ENCODE measurements at regions of chr1 and their contacts with region 1.

Region 1: DNA sequence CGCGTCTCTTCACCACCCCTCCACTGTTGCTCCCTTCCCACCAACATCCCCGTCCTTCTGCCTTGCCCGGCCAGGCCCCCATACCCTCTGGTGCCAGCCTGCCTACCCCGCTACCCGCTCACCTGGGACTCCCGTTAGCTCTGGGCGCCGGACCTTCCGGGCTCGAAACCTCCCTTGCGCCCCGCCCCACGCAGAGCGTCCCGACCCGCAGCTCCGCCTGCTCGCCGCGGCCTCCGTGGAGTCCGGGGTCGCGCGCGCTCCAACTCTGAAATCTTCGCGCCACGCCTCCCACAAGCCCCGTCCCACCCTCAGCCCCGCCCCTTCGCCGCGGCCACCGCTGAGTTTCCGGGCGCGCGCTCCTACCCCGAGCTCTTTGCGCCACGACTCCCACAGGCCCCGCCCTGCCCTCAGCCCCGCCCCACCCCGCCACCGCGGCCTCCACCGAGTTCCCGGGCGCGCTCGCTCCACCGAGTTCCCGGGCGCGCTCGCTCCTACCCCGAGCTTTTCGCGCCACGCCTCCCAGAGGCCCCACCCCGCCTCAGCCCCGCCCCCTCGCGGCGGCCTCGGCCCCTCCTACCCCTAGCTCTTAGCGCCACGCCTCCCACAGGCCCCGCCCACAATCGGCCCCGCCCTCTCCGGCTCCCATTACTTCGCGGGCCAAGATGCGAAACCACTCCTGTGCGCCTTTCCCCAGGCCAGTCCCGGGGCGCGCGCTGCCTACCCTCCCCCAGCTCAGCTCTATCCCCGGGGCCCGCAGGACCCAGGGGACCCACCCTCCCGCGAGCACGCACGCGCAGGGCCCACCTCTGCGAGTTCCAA is at the start of gene IFT25:
- DNase-seq: peak; percentile 95
- H3K4me3 Mint-ChIP-seq: peak within 1 kb of the TSS; percentile 90
- H3K27ac Mint-ChIP-seq: peak within 1 kb of the TSS; percentile 89
- H3K4me1 Mint-ChIP-seq: peaks cover 61% of the 10 kb centered on the region
- H3K27me3 Mint-ChIP-seq: no peaks in the 10 kb centered on the region
- total RNA-seq, gene IFT25: 50.2 and 52.6 TPM in 2 replicates

Region 2: GRCh38 chr1:52056163-52056936 is 1889.3 kb before region 1 on chr1 and contains the start of gene BTF3L4:
- intact Hi-C with region 1: loop called (anchors 10 kb)
- DNase-seq: peak; percentile 92
- H3K4me3 Mint-ChIP-seq: peak within 1 kb of the TSS; percentile 100
- H3K27ac Mint-ChIP-seq: peak within 1 kb of the TSS; percentile 100
- H3K4me1 Mint-ChIP-seq: peaks cover 72% of the 10 kb centered on the region
- H3K27me3 Mint-ChIP-seq: no peaks in the 10 kb centered on the region
- total RNA-seq, gene BTF3L4: 44.9 and 47.5 TPM in 2 replicates

Region 3: GRCh38 chr1:53765657-53766056 is 180.0 kb before region 1 on chr1:
- intact Hi-C with region 1: loop called (anchors 10 kb)
- DNase-seq: no peak
- H3K4me3 Mint-ChIP-seq: peak overlapping the region; percentile 15
- H3K27ac Mint-ChIP-seq: peak overlapping the region; percentile 81
- H3K4me1 Mint-ChIP-seq: peaks cover 34% of the 10 kb centered on the region
- H3K27me3 Mint-ChIP-seq: no peaks in the 10 kb centered on the region

Region 4: DNA sequence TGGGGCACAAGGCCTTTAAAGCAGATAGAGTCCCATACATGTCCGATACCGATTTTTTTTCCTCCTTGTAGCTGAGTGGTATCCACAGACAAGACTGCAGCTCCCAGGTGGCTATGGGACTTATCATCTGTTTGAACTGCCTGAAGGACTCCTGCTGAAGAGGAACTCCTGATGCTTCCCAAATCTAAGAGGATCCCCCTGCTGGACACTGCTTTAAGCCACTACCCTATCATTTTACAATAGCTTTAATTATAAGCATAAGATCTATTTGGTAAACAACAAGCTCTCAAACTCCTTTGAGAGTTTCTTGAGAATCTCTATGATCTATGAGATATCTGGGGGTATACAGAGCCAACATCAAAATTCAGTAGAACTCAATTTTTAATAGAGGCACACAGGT is 119.3 kb before region 1 on chr1:
- intact Hi-C with region 1: no loop called
- DNase-seq: no peak
- H3K4me3 Mint-ChIP-seq: no peak overlapping the region
- H3K27ac Mint-ChIP-seq: no peak overlapping the region
- H3K4me1 Mint-ChIP-seq: no peaks in the 10 kb centered on the region
- H3K27me3 Mint-ChIP-seq: no peaks in the 10 kb centered on the region

Region 5: DNA sequence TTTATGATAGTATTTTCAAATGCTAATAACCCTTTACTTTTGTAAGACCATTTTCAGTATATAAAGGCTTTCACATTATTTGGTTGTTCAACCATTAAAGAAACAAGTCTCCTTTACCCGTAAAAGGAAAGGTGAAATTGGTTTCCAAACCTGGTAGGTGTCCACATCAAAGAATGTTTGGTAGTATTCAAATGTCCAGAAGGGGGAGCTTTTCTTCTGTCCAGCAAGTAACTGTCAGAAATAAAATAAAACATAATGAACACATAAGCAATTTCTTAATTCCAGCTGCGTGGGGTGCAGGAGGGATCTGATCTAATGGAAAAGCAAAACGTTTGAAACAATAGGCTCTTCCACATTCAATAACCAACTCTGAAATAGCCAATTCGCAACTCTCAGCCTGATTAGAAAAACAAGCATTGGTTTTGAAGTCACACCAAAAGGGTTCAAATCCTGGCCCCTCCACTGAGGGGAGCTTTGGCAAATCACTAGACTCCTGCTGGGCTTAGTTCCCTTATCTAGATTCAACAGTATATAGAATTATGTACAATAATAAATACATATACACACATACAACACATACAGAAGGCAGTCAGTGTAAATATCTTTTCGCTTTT is 67.0 kb before region 1 on chr1:
- intact Hi-C with region 1: loop called (anchors 1 kb)
- DNase-seq: no peak
- H3K4me3 Mint-ChIP-seq: no peak overlapping the region
- H3K27ac Mint-ChIP-seq: no peak overlapping the region
- H3K4me1 Mint-ChIP-seq: no peaks in the 10 kb centered on the region
- H3K27me3 Mint-ChIP-seq: no peaks in the 10 kb centered on the region

Region 6: DNA sequence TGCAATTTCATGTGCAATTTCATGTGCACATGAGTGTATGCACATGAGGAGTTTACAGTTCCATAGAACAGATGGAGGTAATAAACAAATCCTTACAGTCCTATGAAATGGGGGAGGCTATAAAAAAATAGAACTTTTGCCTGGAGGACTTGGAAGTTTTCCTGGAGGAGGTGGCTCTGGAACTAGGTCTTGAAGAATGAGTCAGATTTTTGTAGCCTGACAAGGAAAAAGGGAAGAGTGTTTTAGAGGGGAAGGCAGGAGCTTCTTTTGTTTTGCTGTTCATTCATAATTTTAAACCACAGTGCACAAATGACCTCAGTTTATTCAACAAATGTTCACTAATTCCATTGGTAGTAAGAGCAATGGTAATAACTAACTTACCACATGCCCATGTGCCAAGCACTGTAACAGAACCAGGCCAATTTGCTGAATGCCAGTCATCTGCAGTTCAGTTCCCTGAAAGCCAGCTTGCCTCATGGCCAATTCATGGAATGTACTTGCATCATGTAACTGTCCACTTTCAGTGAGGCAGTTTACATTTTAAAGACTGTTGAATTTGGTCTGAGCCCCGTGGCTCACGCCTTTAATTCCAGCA is 48.9 kb before region 1 on chr1:
- intact Hi-C with region 1: no loop called
- DNase-seq: no peak
- H3K4me3 Mint-ChIP-seq: no peak overlapping the region
- H3K27ac Mint-ChIP-seq: no peak overlapping the region
- H3K4me1 Mint-ChIP-seq: peaks cover 11% of the 10 kb centered on the region
- H3K27me3 Mint-ChIP-seq: no peaks in the 10 kb centered on the region

Region 7: GRCh38 chr1:54052934-54053744 is 107.5 kb after region 1 on chr1 and contains the starts of genes TCEANC2 and TMEM59:
- intact Hi-C with region 1: loop called (anchors 1 kb)
- DNase-seq: peak; percentile 98
- H3K4me3 Mint-ChIP-seq: no peak within 1 kb of the TSS
- H3K27ac Mint-ChIP-seq: no peak within 1 kb of the TSS
- H3K4me1 Mint-ChIP-seq: peaks cover 27% of the 10 kb centered on the region
- H3K27me3 Mint-ChIP-seq: no peaks in the 10 kb centered on the region
- total RNA-seq, gene TCEANC2: 11.8 and 12.0 TPM in 2 replicates
- total RNA-seq, gene TMEM59: 119 and 133 TPM in 2 replicates

Region 8: GRCh38 chr1:54227091-54227602 is 281.5 kb after region 1 on chr1:
- intact Hi-C with region 1: no loop called
- DNase-seq: no peak
- H3K4me3 Mint-ChIP-seq: no peak overlapping the region
- H3K27ac Mint-ChIP-seq: peak overlapping the region; percentile 44
- H3K4me1 Mint-ChIP-seq: peaks cover 27% of the 10 kb centered on the region
- H3K27me3 Mint-ChIP-seq: no peaks in the 10 kb centered on the region

Region 9: DNA sequence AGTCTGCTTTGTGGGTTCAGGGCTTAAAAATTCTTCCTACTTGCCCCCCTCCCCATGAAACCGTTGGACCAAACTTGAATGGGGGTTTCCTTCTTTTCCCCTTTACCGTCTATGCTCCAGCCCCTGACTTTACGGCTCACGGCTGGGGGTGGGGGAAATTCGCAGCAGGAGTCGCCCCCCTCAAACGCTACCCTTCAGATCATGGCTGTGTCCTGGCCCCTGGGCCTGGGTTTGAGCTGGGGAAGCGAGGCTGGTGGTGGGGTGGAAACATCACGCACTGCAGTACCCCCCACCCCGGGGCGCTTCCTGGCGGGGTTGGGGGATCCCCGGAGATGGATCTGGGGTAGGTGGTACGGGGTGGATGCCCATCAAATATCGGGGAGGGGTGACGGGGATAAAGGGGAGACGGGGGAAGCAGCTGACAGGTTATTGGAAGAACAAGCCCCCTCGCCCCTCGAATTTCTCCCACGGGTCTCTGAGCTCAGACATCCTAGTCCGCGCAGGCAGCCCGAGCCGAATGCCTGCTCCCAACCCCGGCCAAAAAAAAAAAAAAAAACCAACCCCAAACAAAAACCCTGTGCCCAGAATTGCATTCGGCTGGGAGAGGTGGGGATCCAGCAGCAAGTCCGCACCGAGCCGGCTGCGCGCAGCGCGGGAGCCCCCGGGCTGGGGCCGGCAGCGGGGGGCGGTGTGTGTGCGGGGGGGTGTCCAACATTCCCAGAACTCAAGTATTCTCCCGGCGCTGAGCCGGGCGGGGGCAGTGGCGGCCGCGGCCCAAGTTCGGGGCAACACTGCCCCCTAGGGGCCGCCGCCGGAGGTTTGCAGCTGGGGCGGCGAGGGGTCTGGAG is 543.4 kb after region 1 on chr1:
- intact Hi-C with region 1: loop called (anchors 1 kb)
- DNase-seq: peak; percentile 71
- H3K4me3 Mint-ChIP-seq: peak overlapping the region; percentile 86
- H3K27ac Mint-ChIP-seq: peak overlapping the region; percentile 82
- H3K4me1 Mint-ChIP-seq: peaks cover 36% of the 10 kb centered on the region
- H3K27me3 Mint-ChIP-seq: peaks cover 35% of the 10 kb centered on the region

Region 10: GRCh38 chr1:55127827-55128343 is 1182.2 kb after region 1 on chr1:
- intact Hi-C with region 1: no loop called
- DNase-seq: no peak
- H3K4me3 Mint-ChIP-seq: peak overlapping the region; percentile 8
- H3K27ac Mint-ChIP-seq: peak overlapping the region; percentile 69
- H3K4me1 Mint-ChIP-seq: peaks cover 31% of the 10 kb centered on the region
- H3K27me3 Mint-ChIP-seq: no peaks in the 10 kb centered on the region